Activated CD8-positive, alpha-beta T cell treated with anti-CD3 and anti-CD28 coated beads, Interleukin-2, amount 10 ng/mL, durations not matched to agents 7 days and 5 days (primary cell): ENCODE measurements at regions of chr10 and their contacts with region 1.

Region 1: GRCh38 chr10:5643346-5644067 is 22.9 kb downstream of the ASB13 start:
- DNase-seq: no peak
- ATAC-seq: no peak
- H3K4me3 Mint-ChIP-seq: no peak overlapping the region
- H3K27ac Mint-ChIP-seq: no peak overlapping the region
- H3K4me1 Mint-ChIP-seq: no peaks in the 10 kb centered on the region
- H3K27me3 Mint-ChIP-seq: no peaks in the 10 kb centered on the region

Region 2: DNA sequence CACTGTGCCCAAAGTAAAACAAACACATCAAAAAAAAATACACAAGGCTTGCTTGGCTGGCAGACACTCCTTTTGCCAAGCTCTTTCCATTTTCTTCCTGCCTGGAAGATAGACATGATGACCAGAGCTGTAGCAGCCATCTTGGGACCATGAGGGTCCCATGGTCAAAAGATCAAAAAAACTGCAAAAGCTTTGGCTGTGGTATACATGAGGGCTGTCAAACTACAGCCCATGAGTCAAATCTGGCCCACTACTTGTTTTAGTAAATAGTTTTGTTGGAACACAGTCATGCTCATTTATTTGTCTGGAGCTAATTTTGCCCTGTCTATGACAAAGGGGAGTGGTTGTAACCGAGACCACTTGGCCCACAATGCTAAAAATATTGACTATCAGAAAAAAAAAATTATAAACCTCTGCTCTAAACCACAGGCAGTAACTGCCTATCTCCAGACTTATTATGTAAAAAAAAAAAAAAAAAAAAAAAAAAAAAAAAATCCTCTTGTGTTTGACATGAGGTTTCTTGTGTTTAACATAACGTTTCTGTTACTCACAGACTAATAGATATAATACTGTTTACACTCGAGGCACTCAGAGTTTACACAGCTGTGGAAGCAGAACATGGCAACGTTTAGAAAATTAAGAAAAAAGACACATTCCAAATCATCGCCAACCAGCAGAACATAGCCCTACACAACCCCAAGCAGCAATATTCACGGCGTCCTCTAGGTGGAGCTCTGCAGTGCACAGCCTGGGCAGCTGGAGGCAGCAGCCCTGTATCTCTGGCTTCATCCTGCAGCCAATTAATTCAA is 14.0 kb before region 1 on chr10:
- CTCF ChIA-PET with region 1: interaction called, 20 read pairs
- POLR2A ChIA-PET with region 1: no interaction called
- DNase-seq: peak; percentile 90
- ATAC-seq: peak; percentile 86
- H3K4me3 Mint-ChIP-seq: no peak overlapping the region
- H3K27ac Mint-ChIP-seq: no peak overlapping the region
- H3K4me1 Mint-ChIP-seq: peaks cover 19% of the 10 kb centered on the region
- H3K27me3 Mint-ChIP-seq: peaks cover 6% of the 10 kb centered on the region